Stomach (tissue), 19 donors: ENCODE measurements at regions of chr3 and their contacts with region 1.

Region 1: DNA sequence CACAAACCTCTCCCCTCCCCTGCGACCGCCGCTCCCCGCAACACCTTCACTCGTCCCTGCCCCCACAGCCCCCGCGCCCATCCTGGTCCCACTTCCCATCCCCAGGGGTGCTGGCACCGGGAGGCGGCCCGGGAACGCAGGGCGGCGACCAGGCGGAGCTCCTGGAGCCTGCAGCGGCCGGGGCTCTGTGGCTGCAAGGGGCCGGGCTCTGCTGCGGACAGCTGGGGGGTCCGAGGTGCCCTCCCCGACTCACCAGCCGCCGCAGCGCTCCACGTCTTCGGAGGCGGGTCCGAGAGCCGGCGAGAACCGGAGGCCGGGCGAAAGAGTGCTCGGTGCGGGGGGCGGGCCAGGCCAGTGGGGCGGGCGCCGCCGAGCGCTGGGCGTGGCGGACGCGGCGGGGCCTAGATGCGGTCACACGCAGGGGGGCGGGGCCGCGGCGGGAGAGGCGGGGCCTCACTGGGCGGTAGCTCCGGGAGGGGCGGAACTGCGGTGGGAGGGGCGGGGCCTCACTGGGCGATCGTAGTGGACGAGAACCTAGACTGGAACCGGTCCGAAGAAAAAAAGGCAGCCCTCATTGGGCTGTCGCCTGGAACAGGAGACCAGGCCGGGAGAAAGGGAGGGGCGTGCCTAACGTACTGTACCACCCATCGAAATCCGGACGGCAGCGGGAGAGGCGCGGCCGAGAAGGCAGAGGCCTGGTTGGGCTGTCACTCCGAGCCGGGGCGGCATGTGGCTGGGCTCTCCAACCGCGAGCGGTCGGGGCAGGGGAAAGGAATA is at the start of gene ANO10:
- DNase-seq: peak; percentile 98 to 99
- H3K4me3 ChIP-seq: peak within 1 kb of the TSS; percentile 86 to 95 (median 92)
- H3K27ac ChIP-seq: peak within 1 kb of the TSS; percentile 73 to 90 (median 88)
- H3K4me1 ChIP-seq: peaks cover 0 to 21% (median 13%) of the 10 kb centered on the region in 4 donors
- H3K27me3 ChIP-seq: no peaks in the 10 kb centered on the region
- CTCF ChIP-seq: no peak
- EP300 ChIP-seq: no peak
- POLR2A ChIP-seq: no peak
- total RNA-seq, gene ANO10: 3.6 to 202 (median 15.8) TPM

Region 2: GRCh38 chr3:43389388-43390254 is 232.2 kb before region 1 on chr3:
- intact Hi-C with region 1: no loop called
- DNase-seq: peak; percentile 57 to 76
- H3K4me3 ChIP-seq: no peak overlapping the region
- H3K27ac ChIP-seq: peak overlapping the region; percentile 34 to 85 (median 67)
- H3K4me1 ChIP-seq: peaks cover 7 to 27% (median 19%) of the 10 kb centered on the region in 4 donors
- H3K27me3 ChIP-seq: no peaks in the 10 kb centered on the region
- CTCF ChIP-seq: no peak
- EP300 ChIP-seq: no peak
- POLR2A ChIP-seq: no peak

Region 3: GRCh38 chr3:43676441-43676840 is 54.6 kb after region 1 on chr3:
- intact Hi-C with region 1: loop called (anchors 10 kb)
- DNase-seq: no peak
- H3K4me3 ChIP-seq: no peak overlapping the region
- H3K27ac ChIP-seq: no peak overlapping the region
- H3K4me1 ChIP-seq: no peaks in the 10 kb centered on the region
- H3K27me3 ChIP-seq: no peaks in the 10 kb centered on the region
- CTCF ChIP-seq: no peak
- EP300 ChIP-seq: no peak
- POLR2A ChIP-seq: no peak

Region 4: DNA sequence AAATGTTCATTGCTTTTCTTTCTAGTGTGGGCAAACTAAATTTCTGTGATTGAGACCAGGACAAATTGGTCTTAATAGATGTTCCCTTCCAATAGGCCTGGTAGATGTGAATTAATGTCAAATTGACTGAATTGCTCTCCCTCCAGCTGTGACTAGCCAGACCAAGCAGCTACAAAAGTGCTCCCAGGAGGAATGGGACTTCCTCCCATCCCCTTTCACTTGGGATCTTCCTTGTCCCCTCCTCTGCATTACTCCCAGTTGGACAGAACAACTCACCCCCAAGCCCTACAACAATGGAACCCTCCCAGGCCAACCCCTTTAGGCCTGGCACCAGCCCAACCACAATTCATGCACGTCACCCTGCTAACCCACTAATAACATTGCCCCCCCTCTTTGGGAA is 913.5 kb after region 1 on chr3:
- intact Hi-C with region 1: no loop called
- DNase-seq: no peak
- H3K4me3 ChIP-seq: no peak overlapping the region
- H3K27ac ChIP-seq: no peak overlapping the region
- H3K4me1 ChIP-seq: no peaks in the 10 kb centered on the region
- H3K27me3 ChIP-seq: peaks cover 0 to 59% (median 27%) of the 10 kb centered on the region in 3 donors
- CTCF ChIP-seq: no peak
- EP300 ChIP-seq: no peak
- POLR2A ChIP-seq: no peak